ENCODE measurements at regions of chr12 and their contacts with region 1.

Region 1: DNA sequence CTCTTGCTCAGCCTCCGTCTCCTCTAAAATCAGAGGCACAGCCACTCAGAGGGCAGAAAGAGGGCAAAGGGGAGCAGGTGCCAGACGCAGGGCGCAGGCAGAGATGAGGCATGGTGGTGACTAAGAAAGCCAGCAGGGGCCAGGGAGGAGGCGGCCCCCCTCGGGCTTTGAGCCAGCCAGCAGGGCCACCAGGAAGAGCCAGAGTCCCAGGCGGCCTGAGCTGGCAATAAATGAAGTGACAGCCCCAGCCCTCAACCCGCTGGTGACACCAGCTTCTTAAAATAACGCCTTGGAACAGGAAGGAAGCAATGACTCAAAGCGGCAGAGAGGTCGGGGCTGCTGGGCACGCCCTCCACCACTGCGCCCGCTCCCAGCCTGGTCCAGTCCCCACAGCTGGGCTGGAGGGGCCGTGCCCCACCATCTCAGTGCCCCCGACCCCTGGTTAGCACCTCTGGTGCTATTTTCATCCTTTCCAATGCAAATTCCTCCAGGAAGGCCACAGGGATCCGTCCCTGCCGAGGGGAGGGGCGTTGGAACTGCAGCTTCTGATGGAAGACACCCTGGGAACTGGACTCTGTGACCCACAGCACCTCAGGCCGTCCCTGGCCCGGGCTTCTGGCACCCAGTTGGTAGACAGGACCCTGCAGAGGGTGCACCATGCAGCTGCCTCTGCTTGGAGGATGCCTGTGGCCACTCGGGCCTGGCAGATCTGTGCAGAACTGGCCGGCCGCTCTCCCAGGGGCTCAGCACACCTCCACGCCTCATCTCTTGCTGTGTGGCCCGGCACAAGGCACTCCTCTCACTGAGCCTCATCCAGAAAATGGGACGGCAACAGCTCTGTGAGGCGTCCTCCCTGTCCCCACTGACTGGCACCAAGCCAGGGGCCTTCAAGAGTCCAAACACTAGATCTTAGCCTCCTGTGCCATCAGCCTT is 113.7 kb downstream of the NCOR2 start:
- DNase-seq: peak; percentile 92 to 98
- H3K4me3 ChIP-seq: peak overlapping the region in 1 of 2 donors; percentile 5
- H3K27ac ChIP-seq: peak overlapping the region; percentile 91 to 99
- H3K4me1 ChIP-seq: peaks cover 43 to 44% of the 10 kb centered on the region in 2 donors
- H3K27me3 ChIP-seq: no peaks in the 10 kb centered on the region
- CTCF ChIP-seq: peak in 1 of 3 experiments; percentile 9

Region 2: GRCh38 chr12:124036674-124037109 is 417.0 kb before region 1 on chr12:
- intact Hi-C with region 1: loop called (anchors 10 kb)
- DNase-seq: no peak
- H3K4me3 ChIP-seq: no peak overlapping the region
- H3K27ac ChIP-seq: no peak overlapping the region
- H3K4me1 ChIP-seq: no peaks in the 10 kb centered on the region
- H3K27me3 ChIP-seq: no peaks in the 10 kb centered on the region
- CTCF ChIP-seq: peak; percentile 85 to 88 (median 85)

Region 3: GRCh38 chr12:124379938-124380754 is 73.5 kb before region 1 on chr12:
- intact Hi-C with region 1: loop called (anchors 1 kb)
- DNase-seq: peak; percentile 73 to 96
- H3K4me3 ChIP-seq: peak overlapping the region in 1 of 2 donors; percentile 11
- H3K27ac ChIP-seq: peak overlapping the region; percentile 89 to 90
- H3K4me1 ChIP-seq: peaks cover 15 to 38% of the 10 kb centered on the region in 2 donors
- H3K27me3 ChIP-seq: no peaks in the 10 kb centered on the region
- CTCF ChIP-seq: peak; percentile 59 to 79 (median 67)

Region 4: DNA sequence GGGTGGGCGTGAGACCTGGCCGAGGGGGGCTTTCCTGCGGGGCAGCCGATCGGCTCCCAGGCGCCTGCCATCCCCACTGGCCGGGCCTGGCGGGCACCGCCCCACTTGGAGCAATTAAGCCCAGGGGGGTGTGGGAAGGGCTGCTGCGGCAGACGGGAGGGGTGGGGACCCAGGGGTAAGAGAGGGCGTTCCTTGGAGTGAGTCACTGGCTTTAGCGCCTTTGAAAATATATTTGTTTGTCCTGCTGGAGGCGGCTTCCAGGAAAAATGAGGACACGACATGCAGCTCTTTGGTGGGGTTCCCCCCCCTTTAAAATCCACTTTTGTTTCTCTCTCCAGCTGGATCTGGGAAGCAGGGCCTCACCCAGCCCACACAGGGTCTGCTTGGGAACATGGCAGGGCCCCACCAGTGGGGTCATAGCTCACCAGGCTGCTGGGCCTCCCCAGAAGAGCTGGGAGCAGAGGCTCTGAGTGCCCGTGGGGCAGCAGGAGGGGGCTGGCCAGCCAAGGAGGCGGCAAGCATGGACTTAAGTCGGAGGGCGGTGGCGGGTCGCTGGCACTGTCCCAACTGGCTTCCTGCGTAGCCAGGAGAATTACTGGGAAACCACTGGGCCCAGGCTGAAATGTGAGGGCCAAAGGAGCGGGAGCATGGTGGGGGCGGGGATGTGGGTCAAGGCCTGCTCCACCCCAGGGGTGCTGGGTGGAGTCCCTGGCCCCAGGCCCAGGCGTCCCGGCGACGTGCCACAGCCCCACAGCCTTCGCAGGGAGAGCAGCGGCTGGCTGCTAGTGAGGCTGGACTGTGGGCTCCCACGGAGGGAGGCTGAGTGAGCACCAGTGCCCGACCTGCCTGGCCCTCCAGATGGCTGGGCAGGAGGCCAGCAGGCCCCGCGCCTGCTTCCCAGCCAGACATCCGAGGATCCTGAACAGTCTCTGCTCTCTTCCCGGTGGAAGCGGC is 30.8 kb before region 1 on chr12:
- intact Hi-C with region 1: loop called (anchors 1 kb)
- DNase-seq: peak; percentile 62 to 94
- H3K4me3 ChIP-seq: peak overlapping the region; percentile 42 to 54
- H3K27ac ChIP-seq: peak overlapping the region; percentile 91 to 94
- H3K4me1 ChIP-seq: peaks cover 10 to 31% of the 10 kb centered on the region in 2 donors
- H3K27me3 ChIP-seq: no peaks in the 10 kb centered on the region
- CTCF ChIP-seq: no peak

Region 5: GRCh38 chr12:124518051-124518932 is 64.6 kb after region 1 on chr12:
- intact Hi-C with region 1: loop called (anchors 1 kb)
- DNase-seq: peak; percentile 94 to 100
- H3K4me3 ChIP-seq: peak overlapping the region; percentile 54 to 67
- H3K27ac ChIP-seq: peak overlapping the region; percentile 91 to 97
- H3K4me1 ChIP-seq: peaks cover 39 to 71% of the 10 kb centered on the region in 2 donors
- H3K27me3 ChIP-seq: no peaks in the 10 kb centered on the region
- CTCF ChIP-seq: no peak

Region 6: GRCh38 chr12:124557518-124558223 is 104.0 kb after region 1 on chr12:
- intact Hi-C with region 1: no loop called
- DNase-seq: no peak
- H3K4me3 ChIP-seq: no peak overlapping the region
- H3K27ac ChIP-seq: no peak overlapping the region
- H3K4me1 ChIP-seq: peaks cover 9 to 40% of the 10 kb centered on the region in 2 donors
- H3K27me3 ChIP-seq: no peaks in the 10 kb centered on the region
- CTCF ChIP-seq: no peak

Region 7: DNA sequence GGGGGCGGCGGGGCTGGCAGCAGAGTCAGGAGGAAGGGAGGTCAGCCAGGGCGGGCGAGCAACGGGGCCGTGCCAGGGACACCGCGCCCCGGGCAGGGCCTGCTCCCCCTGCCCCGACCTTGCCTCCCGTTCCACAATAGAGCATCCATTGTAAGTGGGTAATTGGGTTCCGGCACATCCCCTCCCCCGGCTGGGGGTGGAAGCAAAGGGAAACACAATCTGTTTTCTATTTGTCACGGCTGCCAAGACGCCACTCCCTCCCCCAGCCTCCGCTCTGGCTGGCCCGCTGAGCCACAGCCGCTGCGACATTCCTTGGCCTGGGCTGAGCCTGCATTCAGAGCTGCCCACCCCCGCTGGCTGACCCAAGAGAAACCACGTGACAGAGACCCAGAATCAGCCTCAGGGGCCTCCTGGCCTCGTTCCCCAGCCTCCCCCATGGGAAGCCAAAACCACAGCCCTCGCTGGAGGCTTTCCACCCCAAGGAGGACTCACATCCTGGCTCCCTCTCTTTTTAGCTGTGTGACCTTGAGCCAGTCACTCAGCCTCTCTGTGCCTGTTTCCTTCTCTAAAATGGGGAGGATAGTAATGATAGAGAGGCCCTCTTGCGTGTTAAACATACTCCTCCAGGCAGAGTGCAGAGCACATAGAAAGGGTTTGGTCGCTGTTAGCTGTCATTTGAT is 292.3 kb after region 1 on chr12:
- intact Hi-C with region 1: loop called (anchors 5 kb)
- DNase-seq: peak; percentile 77 to 98
- H3K4me3 ChIP-seq: peak overlapping the region in 1 of 2 donors; percentile 2
- H3K27ac ChIP-seq: peak overlapping the region; percentile 83 to 89
- H3K4me1 ChIP-seq: peaks cover 8 to 12% of the 10 kb centered on the region in 2 donors
- H3K27me3 ChIP-seq: no peaks in the 10 kb centered on the region
- CTCF ChIP-seq: no peak